HepG2 (cell line): ENCODE measurements at regions of chr7 and their contacts with region 1.

Region 1: DNA sequence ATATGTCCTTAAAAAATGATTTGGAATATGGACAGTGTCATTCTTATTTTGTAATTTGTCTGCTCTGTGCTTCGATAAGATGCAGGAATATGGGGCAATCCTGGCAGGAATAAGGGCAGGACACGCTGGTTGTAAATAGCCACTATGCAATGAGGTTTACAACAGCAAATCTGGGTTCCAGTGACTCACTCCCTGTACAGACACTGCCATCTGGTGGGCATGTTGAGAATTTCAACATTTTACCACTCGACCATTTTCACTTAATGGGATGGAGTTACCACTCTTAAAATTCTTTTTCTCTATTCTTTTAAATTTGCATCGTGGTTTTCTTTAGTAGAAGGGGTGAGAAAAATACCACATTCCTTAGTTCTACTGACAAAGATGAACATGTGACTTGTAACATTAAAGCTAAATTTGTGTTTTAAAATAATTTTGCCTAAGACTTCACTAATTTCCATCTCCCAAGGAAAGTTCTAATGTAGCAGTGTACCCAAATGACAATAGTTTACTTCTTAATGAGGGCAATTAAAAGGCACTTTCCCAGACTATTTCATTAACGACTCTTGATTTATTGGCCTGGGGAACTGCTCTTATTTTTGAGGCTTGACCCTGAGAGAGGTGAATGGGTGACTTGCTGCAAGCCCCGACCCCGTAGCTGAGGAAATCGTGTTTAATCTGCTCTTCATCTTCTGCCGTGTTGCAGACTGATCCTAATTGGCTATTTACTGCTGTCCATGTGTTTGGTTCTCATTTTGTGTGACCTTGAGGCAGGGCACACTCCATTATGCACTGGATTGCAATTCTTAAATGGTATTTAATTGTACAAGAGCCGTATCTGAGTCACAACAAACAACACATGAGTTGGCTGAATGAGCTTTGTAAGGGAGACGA is 173.6 kb upstream of the IMMP2L start:
- DNase-seq: peak; percentile 64
- ATAC-seq: peak; percentile 71
- H3K4me3 ChIP-seq: no peak overlapping the region
- H3K27ac ChIP-seq: no peak overlapping the region
- H3K4me1 ChIP-seq: no peaks in the 10 kb centered on the region
- H3K27me3 ChIP-seq: no peaks in the 10 kb centered on the region
- CTCF ChIP-seq: peak; percentile 87
- EP300 ChIP-seq: no peak
- POLR2A ChIP-seq: no peak
- RAD21 ChIP-seq: peak; percentile 55; the same call in 1 of the 2 replicates

Region 2: DNA sequence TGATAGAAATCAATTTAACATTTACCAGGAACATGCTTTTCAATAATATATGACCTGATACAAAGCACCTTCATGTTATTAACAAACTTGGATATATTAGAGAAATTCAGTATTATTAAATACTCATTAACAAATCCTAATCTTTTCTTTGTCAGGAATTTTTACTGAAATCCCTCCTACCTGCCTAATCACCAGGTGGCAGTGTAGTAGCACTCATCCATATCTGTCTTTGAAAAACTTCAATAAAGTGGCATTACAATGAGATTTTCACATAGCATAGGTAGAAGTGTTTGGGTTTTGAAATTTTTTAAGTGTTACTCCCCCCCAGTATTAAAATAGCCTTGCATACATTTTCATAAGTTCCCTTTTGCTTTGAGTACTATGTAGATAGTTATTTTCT is 1891.5 kb before region 1 on chr7:
- CTCF ChIA-PET with region 1: interaction called, 4 read pairs
- POLR2A ChIA-PET with region 1: no interaction called
- in situ Hi-C with region 1: no loop called
- intact Hi-C with region 1: loop called (anchors 5 kb)
- DNase-seq: peak; percentile 5
- ATAC-seq: no peak
- H3K4me3 ChIP-seq: no peak overlapping the region
- H3K27ac ChIP-seq: no peak overlapping the region
- H3K4me1 ChIP-seq: no peaks in the 10 kb centered on the region
- H3K27me3 ChIP-seq: no peaks in the 10 kb centered on the region
- CTCF ChIP-seq: peak; percentile 46
- EP300 ChIP-seq: no peak
- POLR2A ChIP-seq: no peak
- RAD21 ChIP-seq: no peak

Region 3: GRCh38 chr7:110534241-110534931 is 1201.5 kb before region 1 on chr7:
- CTCF ChIA-PET with region 1: no interaction called
- POLR2A ChIA-PET with region 1: no interaction called
- in situ Hi-C with region 1: no loop called
- intact Hi-C with region 1: loop called (anchors 5 kb)
- DNase-seq: peak; percentile 4
- ATAC-seq: peak; percentile 66
- H3K4me3 ChIP-seq: 0 out of 6 replicates have a peak overlapping the region, but pooled peaks of 1 of the 3 experiments have one; percentile 12
- H3K27ac ChIP-seq: no peak overlapping the region
- H3K4me1 ChIP-seq: peaks cover 20% of the 10 kb centered on the region
- H3K27me3 ChIP-seq: no peaks in the 10 kb centered on the region
- CTCF ChIP-seq: no peak
- EP300 ChIP-seq: no peak
- POLR2A ChIP-seq: no peak
- RAD21 ChIP-seq: no peak

Region 4: GRCh38 chr7:111089822-111090426 is 646.0 kb before region 1 on chr7:
- CTCF ChIA-PET with region 1: interaction called, 8 read pairs
- POLR2A ChIA-PET with region 1: no interaction called
- in situ Hi-C with region 1: loop called (anchors 25 kb)
- intact Hi-C with region 1: loop called (anchors 2 kb)
- DNase-seq: peak; percentile 40
- ATAC-seq: peak; percentile 45
- H3K4me3 ChIP-seq: no peak overlapping the region
- H3K27ac ChIP-seq: no peak overlapping the region
- H3K4me1 ChIP-seq: no peaks in the 10 kb centered on the region
- H3K27me3 ChIP-seq: no peaks in the 10 kb centered on the region
- CTCF ChIP-seq: peak; percentile 54
- EP300 ChIP-seq: no peak
- POLR2A ChIP-seq: no peak
- RAD21 ChIP-seq: no peak

Region 5: GRCh38 chr7:111329367-111330234 is 406.3 kb before region 1 on chr7:
- CTCF ChIA-PET with region 1: no interaction called
- POLR2A ChIA-PET with region 1: no interaction called
- in situ Hi-C with region 1: loop called (anchors 25 kb)
- intact Hi-C with region 1: loop called (anchors 5 kb)
- DNase-seq: no peak
- ATAC-seq: no peak
- H3K4me3 ChIP-seq: no peak overlapping the region
- H3K27ac ChIP-seq: no peak overlapping the region
- H3K4me1 ChIP-seq: no peaks in the 10 kb centered on the region
- H3K27me3 ChIP-seq: no peaks in the 10 kb centered on the region
- CTCF ChIP-seq: no peak
- EP300 ChIP-seq: no peak
- POLR2A ChIP-seq: no peak
- RAD21 ChIP-seq: no peak

Region 6: GRCh38 chr7:111486472-111487142 is 249.3 kb before region 1 on chr7:
- CTCF ChIA-PET with region 1: interaction called, 4 read pairs
- POLR2A ChIA-PET with region 1: no interaction called
- in situ Hi-C with region 1: no loop called
- intact Hi-C with region 1: loop called (anchors 5 kb)
- DNase-seq: peak; percentile 41
- ATAC-seq: peak; percentile 46
- H3K4me3 ChIP-seq: no peak overlapping the region
- H3K27ac ChIP-seq: no peak overlapping the region
- H3K4me1 ChIP-seq: no peaks in the 10 kb centered on the region
- H3K27me3 ChIP-seq: no peaks in the 10 kb centered on the region
- CTCF ChIP-seq: peak; percentile 73
- EP300 ChIP-seq: no peak
- POLR2A ChIP-seq: no peak
- RAD21 ChIP-seq: peak; percentile 39; the same call in 1 of the 2 replicates

Region 7: GRCh38 chr7:111639934-111640333 is 96.0 kb before region 1 on chr7:
- CTCF ChIA-PET with region 1: no interaction called
- POLR2A ChIA-PET with region 1: no interaction called
- in situ Hi-C with region 1: no loop called
- intact Hi-C with region 1: loop called (anchors 1 kb)
- DNase-seq: no peak
- ATAC-seq: no peak
- H3K4me3 ChIP-seq: no peak overlapping the region
- H3K27ac ChIP-seq: no peak overlapping the region
- H3K4me1 ChIP-seq: no peaks in the 10 kb centered on the region
- H3K27me3 ChIP-seq: no peaks in the 10 kb centered on the region
- CTCF ChIP-seq: no peak
- EP300 ChIP-seq: no peak
- POLR2A ChIP-seq: no peak
- RAD21 ChIP-seq: no peak